B cell (primary cell): ENCODE measurements at regions of chr1 and their contacts with region 1.

Region 1: DNA sequence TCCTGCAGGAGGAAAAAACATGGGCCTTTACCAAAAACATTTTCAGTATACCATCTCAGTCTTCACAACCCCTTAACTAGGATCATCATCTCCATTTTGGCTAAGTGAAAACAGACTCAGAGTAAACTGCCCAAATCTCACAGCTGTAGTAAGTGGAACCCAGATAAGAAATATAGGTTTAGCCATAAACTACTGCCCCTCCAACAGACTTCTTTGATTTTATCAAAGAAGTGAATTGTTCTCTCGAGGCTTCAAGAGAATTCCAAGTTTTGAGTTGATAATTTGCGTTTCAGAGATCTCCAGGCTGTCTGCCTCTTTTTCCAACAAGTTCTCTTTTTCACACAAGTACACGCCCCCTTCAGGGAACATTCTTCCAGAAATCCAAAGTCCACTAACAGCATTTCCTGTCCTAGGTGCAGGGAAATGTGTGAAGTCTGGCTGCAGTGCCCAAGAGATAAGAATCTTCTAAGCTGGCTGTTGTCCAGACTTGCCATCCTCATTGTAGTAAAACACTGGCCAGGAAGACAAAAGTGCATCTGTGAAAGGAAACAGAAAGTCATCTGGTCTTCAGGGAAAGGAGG is 30.8 kb downstream of the RNF19B start:
- DNase-seq: no peak
- ATAC-seq: no peak
- H3K4me3 ChIP-seq: no peak overlapping the region
- H3K4me3 Mint-ChIP-seq: no peak overlapping the region
- H3K27ac ChIP-seq: no peak overlapping the region
- H3K27ac Mint-ChIP-seq: no peak overlapping the region
- H3K4me1 ChIP-seq: no peaks in the 10 kb centered on the region
- H3K4me1 Mint-ChIP-seq: no peaks in the 10 kb centered on the region
- H3K27me3 ChIP-seq: no peaks in the 10 kb centered on the region
- H3K27me3 Mint-ChIP-seq: no peaks in the 10 kb centered on the region
- CTCF ChIP-seq: peak; percentile 34

Region 2: DNA sequence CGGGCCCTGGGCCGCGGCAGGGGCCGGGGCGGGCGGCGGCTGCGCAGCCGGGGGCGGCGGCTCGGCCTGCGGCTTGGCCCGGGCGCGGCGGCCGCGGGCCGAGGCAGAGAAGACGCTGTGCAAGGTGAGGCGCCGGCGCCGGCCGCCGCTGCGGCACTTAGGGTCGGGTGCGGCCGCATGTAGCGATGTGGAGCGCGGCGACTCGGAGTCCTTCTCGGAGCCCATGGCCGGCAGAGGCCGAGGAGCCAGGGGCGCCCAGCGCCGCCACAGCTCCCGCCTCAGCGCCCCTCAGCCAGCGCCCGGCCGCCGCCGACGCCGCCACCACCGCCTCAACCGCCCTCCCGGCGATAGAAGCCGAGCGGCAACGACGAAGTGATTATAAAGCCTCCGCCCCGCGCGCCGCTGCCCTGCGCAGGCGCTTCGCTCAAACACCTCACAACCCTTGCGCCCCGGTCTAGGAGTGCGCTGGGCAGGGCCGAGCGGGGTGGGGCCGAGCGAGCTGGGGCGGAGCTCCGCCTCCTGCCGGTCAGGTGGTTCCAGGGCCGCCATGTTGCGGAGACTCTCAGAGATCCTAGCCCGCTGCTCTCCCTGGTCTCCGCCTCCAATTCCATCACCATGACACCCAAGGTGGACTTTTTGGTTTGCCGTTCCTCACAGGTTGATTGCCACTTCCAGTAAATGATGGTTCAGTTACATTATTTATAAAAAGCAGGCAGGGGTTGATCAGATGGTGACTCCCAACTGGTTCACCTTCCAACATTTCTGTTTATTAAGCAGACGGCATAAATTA is 30.8 kb after region 1 on chr1 and contains the start of gene RNF19B:
- CTCF ChIA-PET with region 1: interaction called, 13 read pairs
- POLR2A ChIA-PET with region 1: no interaction called
- intact Hi-C with region 1: no loop called
- DNase-seq: peak; percentile 97
- ATAC-seq: peak; percentile 90
- H3K4me3 ChIP-seq: peak within 1 kb of the TSS; percentile 51 to 94 (median 68)
- H3K4me3 Mint-ChIP-seq: peak within 1 kb of the TSS; percentile 91
- H3K27ac ChIP-seq: peak within 1 kb of the TSS; percentile 76 to 84
- H3K27ac Mint-ChIP-seq: peak within 1 kb of the TSS; percentile 93
- H3K4me1 ChIP-seq: peaks cover 30 to 35% of the 10 kb centered on the region in 2 donors
- H3K4me1 Mint-ChIP-seq: peaks cover 36% of the 10 kb centered on the region
- H3K27me3 ChIP-seq: no peaks in the 10 kb centered on the region
- H3K27me3 Mint-ChIP-seq: no peaks in the 10 kb centered on the region
- CTCF ChIP-seq: no peak
- total RNA-seq, gene RNF19B: 38.4 and 40.3 TPM in 2 replicates

Region 3: DNA sequence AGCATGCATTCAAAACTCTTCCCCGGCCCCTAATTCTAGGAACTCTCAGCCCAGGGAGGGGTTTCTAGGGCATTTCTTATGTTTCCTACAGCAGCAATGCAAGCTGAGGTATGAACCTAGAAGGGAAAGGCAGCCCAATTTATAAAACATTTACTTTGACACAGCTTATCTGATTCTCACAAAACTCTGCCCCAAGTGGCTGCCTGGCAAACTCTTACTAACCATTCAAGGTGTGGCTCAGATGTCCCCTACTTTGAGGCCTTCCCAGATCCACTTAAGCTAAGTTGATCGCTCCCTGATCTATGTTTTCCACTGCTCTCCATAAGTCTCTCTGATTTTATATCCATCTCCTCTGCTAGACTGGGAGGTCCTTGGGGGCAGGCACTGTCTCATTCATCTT is 67.5 kb after region 1 on chr1:
- CTCF ChIA-PET with region 1: interaction called, 205 read pairs
- POLR2A ChIA-PET with region 1: interaction called, 4 read pairs
- intact Hi-C with region 1: no loop called
- DNase-seq: no peak
- ATAC-seq: no peak
- H3K4me3 ChIP-seq: no peak overlapping the region
- H3K4me3 Mint-ChIP-seq: no peak overlapping the region
- H3K27ac ChIP-seq: no peak overlapping the region
- H3K27ac Mint-ChIP-seq: no peak overlapping the region
- H3K4me1 ChIP-seq: peaks cover 6 to 11% of the 10 kb centered on the region in 2 donors
- H3K4me1 Mint-ChIP-seq: peaks cover 20% of the 10 kb centered on the region
- H3K27me3 ChIP-seq: no peaks in the 10 kb centered on the region
- H3K27me3 Mint-ChIP-seq: no peaks in the 10 kb centered on the region
- CTCF ChIP-seq: no peak

Region 4: GRCh38 chr1:33055210-33056008 is 121.6 kb after region 1 on chr1:
- CTCF ChIA-PET with region 1: interaction called, 125 read pairs
- POLR2A ChIA-PET with region 1: no interaction called
- intact Hi-C with region 1: loop called (anchors 1 kb)
- DNase-seq: peak; percentile 60
- ATAC-seq: peak; percentile 28
- H3K4me3 ChIP-seq: no peak overlapping the region
- H3K4me3 Mint-ChIP-seq: no peak overlapping the region
- H3K27ac ChIP-seq: no peak overlapping the region
- H3K27ac Mint-ChIP-seq: peak overlapping the region; percentile 37
- H3K4me1 ChIP-seq: peaks cover 9 to 11% of the 10 kb centered on the region in 2 donors
- H3K4me1 Mint-ChIP-seq: peaks cover 12% of the 10 kb centered on the region
- H3K27me3 ChIP-seq: no peaks in the 10 kb centered on the region
- H3K27me3 Mint-ChIP-seq: no peaks in the 10 kb centered on the region
- CTCF ChIP-seq: peak; percentile 68